B cell (primary cell): ENCODE measurements at regions of chr22 and their contacts with region 1.

Region 1: GRCh38 chr22:22397277-22397870 is 111.2 kb downstream of the ZNF280B start:
- DNase-seq: no peak
- ATAC-seq: no peak
- H3K4me3 ChIP-seq: no peak overlapping the region
- H3K4me3 Mint-ChIP-seq: no peak overlapping the region
- H3K27ac ChIP-seq: peak overlapping the region in 1 of 2 donors; percentile 48
- H3K27ac Mint-ChIP-seq: peak overlapping the region; percentile 78
- H3K4me1 ChIP-seq: peaks cover 42 to 69% of the 10 kb centered on the region in 2 donors
- H3K4me1 Mint-ChIP-seq: peaks cover 57% of the 10 kb centered on the region
- H3K27me3 ChIP-seq: peaks cover 0 to 3% (median 0%) of the 10 kb centered on the region in 4 experiments
- H3K27me3 Mint-ChIP-seq: no peaks in the 10 kb centered on the region
- CTCF ChIP-seq: no peak

Region 2: GRCh38 chr22:22349455-22349836 is 47.9 kb before region 1 on chr22:
- CTCF ChIA-PET with region 1: interaction called, 4 read pairs
- POLR2A ChIA-PET with region 1: no interaction called
- intact Hi-C with region 1: loop called (anchors 1 kb)
- DNase-seq: no peak
- ATAC-seq: no peak
- H3K4me3 ChIP-seq: no peak overlapping the region
- H3K4me3 Mint-ChIP-seq: no peak overlapping the region
- H3K27ac ChIP-seq: no peak overlapping the region
- H3K27ac Mint-ChIP-seq: no peak overlapping the region
- H3K4me1 ChIP-seq: peaks cover 17 to 27% of the 10 kb centered on the region in 2 donors
- H3K4me1 Mint-ChIP-seq: peaks cover 37% of the 10 kb centered on the region
- H3K27me3 ChIP-seq: no peaks in the 10 kb centered on the region
- H3K27me3 Mint-ChIP-seq: no peaks in the 10 kb centered on the region
- CTCF ChIP-seq: no peak

Region 3: GRCh38 chr22:22357024-22357883 is 40.1 kb before region 1 on chr22:
- CTCF ChIA-PET with region 1: interaction called, 6 read pairs
- POLR2A ChIA-PET with region 1: no interaction called
- intact Hi-C with region 1: loop called (anchors 1 kb)
- DNase-seq: peak; percentile 93
- ATAC-seq: peak; percentile 90
- H3K4me3 ChIP-seq: peak overlapping the region in 3 of 5 experiments; percentile 18 to 27 (median 26)
- H3K4me3 Mint-ChIP-seq: peak overlapping the region; percentile 65
- H3K27ac ChIP-seq: peak overlapping the region; percentile 61 to 71
- H3K27ac Mint-ChIP-seq: peak overlapping the region; percentile 90
- H3K4me1 ChIP-seq: peaks cover 29 to 49% of the 10 kb centered on the region in 2 donors
- H3K4me1 Mint-ChIP-seq: peaks cover 59% of the 10 kb centered on the region
- H3K27me3 ChIP-seq: no peaks in the 10 kb centered on the region
- H3K27me3 Mint-ChIP-seq: no peaks in the 10 kb centered on the region
- CTCF ChIP-seq: peak; percentile 72

Region 4: DNA sequence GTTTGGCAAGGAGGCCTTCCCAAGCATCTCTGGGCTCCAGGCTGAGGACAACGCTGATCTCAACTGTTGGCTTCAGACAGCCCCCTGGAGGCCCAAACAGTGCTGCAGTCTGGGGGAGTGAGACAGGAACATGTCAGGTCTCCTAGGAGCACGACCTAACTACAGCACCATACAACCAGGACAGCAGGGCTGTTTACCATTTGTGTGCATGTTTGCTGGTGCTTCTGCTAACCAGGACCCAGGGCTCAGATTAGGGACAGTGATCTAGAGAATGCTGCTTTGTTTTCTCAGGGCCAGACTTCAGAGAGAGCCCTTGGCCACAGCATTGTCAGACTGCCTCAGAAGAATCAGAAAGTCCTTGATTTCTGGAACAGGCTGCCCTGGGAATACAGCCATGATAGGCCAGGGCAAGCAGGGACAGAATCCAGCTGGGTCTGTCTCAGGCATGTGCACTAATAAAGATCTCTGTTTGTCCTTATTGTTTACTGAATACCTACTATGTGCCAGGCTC is 26.3 kb before region 1 on chr22:
- CTCF ChIA-PET with region 1: interaction called, 21 read pairs
- POLR2A ChIA-PET with region 1: no interaction called
- intact Hi-C with region 1: no loop called
- DNase-seq: no peak
- ATAC-seq: no peak
- H3K4me3 ChIP-seq: no peak overlapping the region
- H3K4me3 Mint-ChIP-seq: peak overlapping the region; percentile 29
- H3K27ac ChIP-seq: no peak overlapping the region
- H3K27ac Mint-ChIP-seq: peak overlapping the region; percentile 64
- H3K4me1 ChIP-seq: peaks cover 73 to 76% of the 10 kb centered on the region in 2 donors
- H3K4me1 Mint-ChIP-seq: peaks cover 87% of the 10 kb centered on the region
- H3K27me3 ChIP-seq: no peaks in the 10 kb centered on the region
- H3K27me3 Mint-ChIP-seq: no peaks in the 10 kb centered on the region
- CTCF ChIP-seq: no peak

Region 5: DNA sequence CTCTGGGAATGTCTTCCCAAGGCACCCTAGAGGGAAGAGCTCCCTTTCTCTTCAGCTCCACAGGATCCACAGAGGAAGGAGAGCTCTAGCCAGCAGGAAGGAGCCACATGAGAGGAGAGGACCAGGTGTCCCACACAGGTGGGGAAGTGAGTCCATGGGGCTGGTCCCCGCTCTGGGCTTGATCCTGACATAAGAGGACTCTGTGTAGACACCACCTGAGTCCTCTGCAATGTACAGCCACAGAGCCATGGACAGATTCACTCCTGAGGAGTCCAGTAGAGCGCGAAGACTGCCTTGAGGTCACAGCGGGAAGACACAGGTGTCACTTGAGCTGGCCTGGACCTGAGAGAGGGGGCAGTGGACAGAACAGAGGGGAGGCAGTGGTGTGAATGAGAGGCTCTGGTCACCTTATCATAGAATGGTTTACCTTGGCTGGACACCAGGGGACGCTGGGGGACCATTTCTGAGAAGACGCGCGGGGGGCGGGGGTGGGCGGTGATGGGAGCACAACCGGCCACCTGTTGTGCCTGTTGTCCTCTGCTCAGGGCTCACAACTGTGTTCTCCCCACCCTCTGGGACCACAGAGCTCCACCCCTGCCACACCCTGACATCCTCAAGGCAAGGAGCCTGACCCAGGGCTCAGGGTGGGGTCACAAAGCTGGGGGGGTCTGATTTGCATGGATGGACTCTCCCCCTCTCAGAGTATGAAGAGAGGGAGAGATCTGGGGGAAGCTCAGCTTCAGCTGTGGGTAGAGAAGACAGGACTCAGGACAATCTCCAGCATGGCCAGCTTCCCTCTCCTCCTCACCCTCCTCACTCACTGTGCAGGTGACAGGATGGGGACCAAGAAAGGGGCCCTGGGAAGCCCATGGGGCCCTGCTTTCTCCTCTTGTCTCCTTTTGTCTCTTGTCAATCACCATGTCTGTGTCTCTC is 17.0 kb before region 1 on chr22:
- CTCF ChIA-PET with region 1: interaction called, 11 read pairs
- POLR2A ChIA-PET with region 1: no interaction called
- intact Hi-C with region 1: no loop called
- DNase-seq: peak; percentile 87
- ATAC-seq: peak; percentile 88
- H3K4me3 ChIP-seq: peak overlapping the region in 1 of 5 experiments; percentile 15
- H3K4me3 Mint-ChIP-seq: peak overlapping the region; percentile 77
- H3K27ac ChIP-seq: peak overlapping the region; percentile 60 to 72
- H3K27ac Mint-ChIP-seq: peak overlapping the region; percentile 94
- H3K4me1 ChIP-seq: peaks cover 59 to 69% of the 10 kb centered on the region in 2 donors
- H3K4me1 Mint-ChIP-seq: peaks cover 79% of the 10 kb centered on the region
- H3K27me3 ChIP-seq: no peaks in the 10 kb centered on the region
- H3K27me3 Mint-ChIP-seq: no peaks in the 10 kb centered on the region
- CTCF ChIP-seq: peak; percentile 66

Region 6: GRCh38 chr22:22408731-22409696 is 11.6 kb after region 1 on chr22:
- CTCF ChIA-PET with region 1: interaction called, 9 read pairs
- POLR2A ChIA-PET with region 1: interaction called, 3 read pairs
- intact Hi-C with region 1: loop called (anchors 1 kb)
- DNase-seq: peak; percentile 69
- ATAC-seq: peak; percentile 43
- H3K4me3 ChIP-seq: peak overlapping the region in 1 of 5 experiments; percentile 21
- H3K4me3 Mint-ChIP-seq: peak overlapping the region; percentile 74
- H3K27ac ChIP-seq: peak overlapping the region in 1 of 2 donors; percentile 60
- H3K27ac Mint-ChIP-seq: peak overlapping the region; percentile 53
- H3K4me1 ChIP-seq: peaks cover 39 to 61% of the 10 kb centered on the region in 2 donors
- H3K4me1 Mint-ChIP-seq: peaks cover 61% of the 10 kb centered on the region
- H3K27me3 ChIP-seq: no peaks in the 10 kb centered on the region
- H3K27me3 Mint-ChIP-seq: no peaks in the 10 kb centered on the region
- CTCF ChIP-seq: no peak